Endothelial cell of umbilical vein (primary cell): ENCODE measurements at regions of chr16 and their contacts with region 1.

Region 1: GRCh38 chr16:66483689-66484481 is 56.8 kb downstream of the BEAN1 start:
- DNase-seq: peak; percentile 79
- H3K4me3 ChIP-seq: no peak overlapping the region
- H3K27ac ChIP-seq: no peak overlapping the region
- H3K4me1 ChIP-seq: peaks cover 2% of the 10 kb centered on the region
- H3K27me3 ChIP-seq: no peaks in the 10 kb centered on the region
- CTCF ChIP-seq: peak; percentile 98 to 99
- POLR2A ChIP-seq: no peak

Region 2: GRCh38 chr16:66275775-66276428 is 208.0 kb before region 1 on chr16:
- CTCF ChIA-PET with region 1: interaction called, 3 read pairs
- POLR2A ChIA-PET with region 1: no interaction called
- dilution Hi-C with region 1: no loop called
- intact Hi-C with region 1: loop called (anchors 1 kb)
- DNase-seq: peak; percentile 73
- H3K4me3 ChIP-seq: no peak overlapping the region
- H3K27ac ChIP-seq: no peak overlapping the region
- H3K4me1 ChIP-seq: peaks cover 4% of the 10 kb centered on the region
- H3K27me3 ChIP-seq: peaks cover 2 to 5% of the 10 kb centered on the region in 2 experiments
- CTCF ChIP-seq: peak; percentile 70 to 86
- POLR2A ChIP-seq: no peak

Region 3: DNA sequence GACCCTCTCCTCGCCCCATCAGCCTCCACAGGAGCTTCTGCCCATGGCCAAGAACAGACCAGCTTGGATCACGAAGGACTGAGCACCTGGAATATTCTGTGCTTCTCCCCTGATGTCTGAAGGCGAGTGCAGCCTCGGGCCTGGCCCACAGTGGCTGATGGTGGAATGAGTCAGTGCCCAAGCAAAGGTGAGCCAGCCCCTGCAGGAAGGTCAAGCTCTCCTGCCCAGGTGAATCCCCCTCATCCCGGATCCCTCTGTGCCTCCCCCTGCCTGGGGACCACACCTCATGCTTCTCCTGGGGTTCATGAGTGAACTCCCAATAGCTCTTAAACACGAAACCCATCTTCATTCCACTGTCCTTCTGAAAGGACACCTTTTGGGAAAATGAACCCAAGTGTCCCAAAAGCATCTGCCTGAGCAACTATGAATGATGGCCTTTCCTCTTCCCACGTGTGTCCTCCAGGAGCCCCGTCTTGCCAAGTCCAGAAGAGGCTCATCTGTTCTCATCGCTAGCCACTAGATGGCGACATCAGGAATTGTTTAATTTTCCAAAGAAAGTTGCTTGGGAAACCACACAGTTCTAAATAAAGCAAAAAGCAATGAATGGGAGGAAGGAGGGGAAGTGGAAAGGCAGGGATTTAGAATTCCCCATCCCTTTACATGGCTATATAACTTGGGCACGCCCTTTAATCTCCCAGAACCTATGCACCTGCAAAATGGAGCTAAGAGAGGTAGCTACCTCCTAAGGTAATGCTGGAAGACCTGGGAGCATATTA is 126.5 kb before region 1 on chr16:
- CTCF ChIA-PET with region 1: no interaction called
- POLR2A ChIA-PET with region 1: no interaction called
- dilution Hi-C with region 1: no loop called
- intact Hi-C with region 1: loop called (anchors 5 kb)
- DNase-seq: peak; percentile 93
- H3K4me3 ChIP-seq: no peak overlapping the region
- H3K27ac ChIP-seq: peak overlapping the region; percentile 99
- H3K4me1 ChIP-seq: peaks cover 51% of the 10 kb centered on the region
- H3K27me3 ChIP-seq: no peaks in the 10 kb centered on the region
- CTCF ChIP-seq: peak; percentile 74 to 84
- POLR2A ChIP-seq: no peak

Region 4: DNA sequence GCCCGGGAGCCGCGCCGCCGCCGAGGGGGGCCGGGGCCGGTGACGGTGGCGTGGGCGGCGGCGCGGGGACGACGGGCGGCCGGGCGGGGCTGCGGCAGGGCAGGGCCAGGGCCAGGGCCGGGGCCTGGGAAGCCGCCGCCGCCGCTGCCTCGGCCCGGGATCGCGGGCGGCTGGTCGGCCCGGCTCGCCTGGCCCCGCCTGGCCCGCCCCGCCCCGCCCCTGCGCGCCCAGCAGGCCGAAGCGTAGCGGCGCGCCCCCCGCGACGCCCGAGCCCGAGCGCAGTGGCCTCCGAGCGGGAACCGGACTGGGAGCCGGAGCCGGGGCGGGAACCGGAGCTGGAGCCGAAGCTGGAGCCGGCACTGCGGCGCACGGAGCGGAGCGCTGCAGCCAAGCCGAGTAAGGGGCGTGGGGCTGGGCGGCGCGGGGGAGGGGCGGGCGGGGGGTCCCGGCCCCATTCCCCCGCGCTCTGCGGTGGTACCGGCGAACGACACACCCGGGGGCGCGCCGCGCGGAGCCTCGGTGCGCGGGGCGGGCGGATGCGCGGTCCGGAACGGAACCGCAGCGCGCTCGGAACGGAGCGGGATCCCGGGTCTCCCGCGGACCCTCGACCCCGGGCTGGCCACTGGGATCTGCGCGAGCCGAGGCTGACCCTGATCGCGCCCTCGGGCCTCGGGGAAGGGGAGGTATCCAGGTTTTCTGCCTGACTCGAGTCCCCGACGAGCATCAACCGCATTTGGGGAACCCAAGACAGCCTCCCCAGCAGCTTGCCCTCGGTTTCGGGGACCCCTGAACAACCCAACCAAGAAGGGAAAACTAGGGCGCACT is 56.6 kb before region 1 on chr16 and contains the start of gene BEAN1:
- CTCF ChIA-PET with region 1: no interaction called
- POLR2A ChIA-PET with region 1: no interaction called
- dilution Hi-C with region 1: no loop called
- intact Hi-C with region 1: loop called (anchors 5 kb)
- DNase-seq: no peak
- H3K4me3 ChIP-seq: peak within 1 kb of the TSS in 1 of 3 experiments; percentile 23
- H3K27ac ChIP-seq: no peak within 1 kb of the TSS
- H3K4me1 ChIP-seq: peaks cover 2% of the 10 kb centered on the region
- H3K27me3 ChIP-seq: peaks cover 61 to 69% of the 10 kb centered on the region in 2 experiments
- CTCF ChIP-seq: no peak
- POLR2A ChIP-seq: no peak
- total RNA-seq, gene BEAN1: not detected in 2 replicates

Region 5: DNA sequence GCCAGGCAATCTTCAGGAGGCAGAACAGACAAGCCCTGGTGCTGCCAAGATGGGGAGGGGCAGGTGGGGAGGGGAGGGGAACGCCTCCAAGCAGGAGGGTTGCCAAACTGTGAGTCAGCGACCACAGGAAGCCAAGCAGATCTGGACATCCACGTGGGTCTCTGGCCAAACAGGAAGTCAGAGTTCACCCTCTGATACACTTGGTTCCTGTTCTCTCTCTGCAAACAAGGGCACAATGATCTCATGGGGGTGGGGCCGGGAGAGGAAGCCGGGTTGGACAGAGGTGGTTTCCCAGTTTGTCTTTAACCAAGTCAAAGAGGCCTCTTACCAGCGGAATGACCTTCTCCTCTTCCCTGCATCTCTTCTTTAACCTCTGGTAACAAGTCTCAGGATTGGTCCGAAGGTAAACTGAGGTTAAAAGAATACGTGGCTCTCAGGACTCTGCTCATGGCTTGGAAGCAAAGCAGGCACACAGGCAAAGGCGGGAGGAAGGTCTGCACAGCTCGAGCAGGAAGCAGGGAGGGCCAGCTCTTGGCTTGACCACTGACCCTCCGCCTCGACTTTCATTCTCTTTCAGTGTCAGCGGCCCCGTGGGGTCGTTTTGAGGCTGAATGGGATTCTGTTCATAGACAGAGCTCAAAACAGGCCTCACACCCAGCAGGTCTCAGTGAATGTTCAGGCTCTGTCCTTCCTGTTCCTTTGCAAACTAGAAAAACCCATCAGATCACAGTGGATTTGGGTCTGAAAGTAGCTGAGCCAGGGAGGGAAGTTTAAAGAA is 33.1 kb after region 1 on chr16:
- CTCF ChIA-PET with region 1: interaction called, 17 read pairs
- POLR2A ChIA-PET with region 1: no interaction called
- dilution Hi-C with region 1: no loop called
- intact Hi-C with region 1: loop called (anchors 1 kb)
- DNase-seq: peak; percentile 100
- H3K4me3 ChIP-seq: peak overlapping the region in 1 of 3 experiments; percentile 0
- H3K27ac ChIP-seq: peak overlapping the region; percentile 97
- H3K4me1 ChIP-seq: peaks cover 81% of the 10 kb centered on the region
- H3K27me3 ChIP-seq: no peaks in the 10 kb centered on the region
- CTCF ChIP-seq: no peak
- POLR2A ChIP-seq: peak; percentile 83